ENCODE measurements at regions of chr4 and their contacts with region 1.

Region 1: GRCh38 chr4:110516106-110516922 is 40.4 kb downstream of the ENPEP start:
- DNase-seq: peak; percentile 31 to 85 (median 62)
- ATAC-seq: peak; percentile 76 to 91 (median 88)
- H3K4me3 ChIP-seq: peak overlapping the region; percentile 60 to 70
- H3K4me3 Mint-ChIP-seq: peak overlapping the region; percentile 90 to 95 (median 90)
- H3K27ac ChIP-seq: peak overlapping the region; percentile 32
- H3K27ac Mint-ChIP-seq: peak overlapping the region; percentile 81 to 85
- H3K4me1 ChIP-seq: peaks cover 0 to 3% of the 10 kb centered on the region in 2 experiments
- H3K4me1 Mint-ChIP-seq: peaks cover 11 to 14% (median 13%) of the 10 kb centered on the region in 3 donors
- H3K27me3 ChIP-seq: no peaks in the 10 kb centered on the region
- H3K27me3 Mint-ChIP-seq: peaks cover 4 to 8% of the 10 kb centered on the region in 2 donors

Region 2: GRCh38 chr4:109998867-109999584 is 517.3 kb before region 1 on chr4:
- CTCF ChIA-PET with region 1: interaction called, 62 to 86 read pairs
- POLR2A ChIA-PET with region 1: no interaction called
- DNase-seq: peak in 13 of 35 experiments; percentile 0 to 84 (median 15)
- ATAC-seq: peak; percentile 59 to 80 (median 68)
- H3K4me3 ChIP-seq: no peak overlapping the region
- H3K4me3 Mint-ChIP-seq: no peak overlapping the region
- H3K27ac ChIP-seq: no peak overlapping the region
- H3K27ac Mint-ChIP-seq: no peak overlapping the region
- H3K4me1 ChIP-seq: no peaks in the 10 kb centered on the region
- H3K4me1 Mint-ChIP-seq: peaks cover 0 to 9% (median 0%) of the 10 kb centered on the region in 3 donors
- H3K27me3 ChIP-seq: peaks cover 0 to 3% of the 10 kb centered on the region in 2 experiments
- H3K27me3 Mint-ChIP-seq: peaks cover 3 to 9% of the 10 kb centered on the region in 2 donors

Region 3: GRCh38 chr4:110005461-110006056 is 510.8 kb before region 1 on chr4:
- CTCF ChIA-PET with region 1: interaction called, 62 to 86 read pairs
- POLR2A ChIA-PET with region 1: no interaction called
- DNase-seq: peak in 3 of 35 experiments; percentile 12 to 78 (median 15)
- ATAC-seq: peak in 1 of 4 experiments; percentile 69
- H3K4me3 ChIP-seq: no peak overlapping the region
- H3K4me3 Mint-ChIP-seq: no peak overlapping the region
- H3K27ac ChIP-seq: no peak overlapping the region
- H3K27ac Mint-ChIP-seq: no peak overlapping the region
- H3K4me1 ChIP-seq: no peaks in the 10 kb centered on the region
- H3K4me1 Mint-ChIP-seq: peaks cover 0 to 10% (median 4%) of the 10 kb centered on the region in 3 donors
- H3K27me3 ChIP-seq: no peaks in the 10 kb centered on the region
- H3K27me3 Mint-ChIP-seq: no peaks in the 10 kb centered on the region

Region 4: GRCh38 chr4:110071466-110071865 is 444.8 kb before region 1 on chr4:
- CTCF ChIA-PET with region 1: no interaction called
- POLR2A ChIA-PET with region 1: no interaction called
- DNase-seq: no peak
- ATAC-seq: no peak
- H3K4me3 ChIP-seq: no peak overlapping the region
- H3K4me3 Mint-ChIP-seq: no peak overlapping the region
- H3K27ac ChIP-seq: no peak overlapping the region
- H3K27ac Mint-ChIP-seq: no peak overlapping the region
- H3K4me1 ChIP-seq: no peaks in the 10 kb centered on the region
- H3K4me1 Mint-ChIP-seq: no peaks in the 10 kb centered on the region
- H3K27me3 ChIP-seq: no peaks in the 10 kb centered on the region
- H3K27me3 Mint-ChIP-seq: no peaks in the 10 kb centered on the region

Region 5: DNA sequence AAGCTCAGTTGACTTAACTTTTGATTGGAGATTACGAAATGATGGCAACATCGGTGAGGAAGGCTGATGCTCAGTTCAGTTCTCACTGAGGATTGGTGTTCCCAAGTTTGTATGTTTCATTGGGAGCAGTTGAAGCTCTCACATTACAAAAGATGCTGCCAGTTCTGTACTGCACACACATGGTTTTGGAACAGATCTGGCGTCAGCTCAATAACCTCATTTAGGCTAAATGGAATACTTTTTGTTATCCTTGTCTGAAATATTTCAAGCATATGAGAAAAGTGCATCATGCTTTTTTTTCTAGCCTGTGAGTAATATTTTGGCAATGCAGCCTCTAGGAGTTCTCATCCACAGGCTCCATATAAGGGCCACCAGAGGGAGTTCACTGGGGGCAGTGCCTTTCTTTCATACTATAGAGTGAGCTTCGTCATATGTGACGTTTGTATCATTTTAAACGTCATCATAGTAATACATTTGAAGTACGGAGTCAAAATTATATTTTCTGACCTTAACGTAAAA is 36.2 kb before region 1 on chr4:
- CTCF ChIA-PET with region 1: no interaction called
- POLR2A ChIA-PET with region 1: no interaction called
- DNase-seq: no peak
- ATAC-seq: no peak
- H3K4me3 ChIP-seq: no peak overlapping the region
- H3K4me3 Mint-ChIP-seq: no peak overlapping the region
- H3K27ac ChIP-seq: no peak overlapping the region
- H3K27ac Mint-ChIP-seq: no peak overlapping the region
- H3K4me1 ChIP-seq: no peaks in the 10 kb centered on the region
- H3K4me1 Mint-ChIP-seq: no peaks in the 10 kb centered on the region
- H3K27me3 ChIP-seq: peaks cover 0 to 10% of the 10 kb centered on the region in 2 experiments
- H3K27me3 Mint-ChIP-seq: peaks cover 31 to 50% of the 10 kb centered on the region in 2 donors

Region 6: GRCh38 chr4:110550260-110550659 is 33.9 kb after region 1 on chr4:
- CTCF ChIA-PET with region 1: interaction called in 1 of 2 experiments, 12 read pairs
- POLR2A ChIA-PET with region 1: no interaction called
- DNase-seq: no peak
- ATAC-seq: no peak
- H3K4me3 ChIP-seq: no peak overlapping the region
- H3K4me3 Mint-ChIP-seq: no peak overlapping the region
- H3K27ac ChIP-seq: no peak overlapping the region
- H3K27ac Mint-ChIP-seq: no peak overlapping the region
- H3K4me1 ChIP-seq: no peaks in the 10 kb centered on the region
- H3K4me1 Mint-ChIP-seq: no peaks in the 10 kb centered on the region
- H3K27me3 ChIP-seq: no peaks in the 10 kb centered on the region
- H3K27me3 Mint-ChIP-seq: peaks cover 6 to 21% of the 10 kb centered on the region in 2 donors

Region 7: GRCh38 chr4:110597582-110597981 is 81.3 kb after region 1 on chr4:
- CTCF ChIA-PET with region 1: no interaction called
- POLR2A ChIA-PET with region 1: no interaction called
- DNase-seq: no peak
- ATAC-seq: no peak
- H3K4me3 ChIP-seq: no peak overlapping the region
- H3K4me3 Mint-ChIP-seq: no peak overlapping the region
- H3K27ac ChIP-seq: no peak overlapping the region
- H3K27ac Mint-ChIP-seq: no peak overlapping the region
- H3K4me1 ChIP-seq: no peaks in the 10 kb centered on the region
- H3K4me1 Mint-ChIP-seq: no peaks in the 10 kb centered on the region
- H3K27me3 ChIP-seq: peaks cover 0 to 2% of the 10 kb centered on the region in 2 experiments
- H3K27me3 Mint-ChIP-seq: peaks cover 12 to 21% of the 10 kb centered on the region in 2 donors